Caco-2 (cell line): ENCODE measurements at regions of chr3 and their contacts with region 1.

Region 1: DNA sequence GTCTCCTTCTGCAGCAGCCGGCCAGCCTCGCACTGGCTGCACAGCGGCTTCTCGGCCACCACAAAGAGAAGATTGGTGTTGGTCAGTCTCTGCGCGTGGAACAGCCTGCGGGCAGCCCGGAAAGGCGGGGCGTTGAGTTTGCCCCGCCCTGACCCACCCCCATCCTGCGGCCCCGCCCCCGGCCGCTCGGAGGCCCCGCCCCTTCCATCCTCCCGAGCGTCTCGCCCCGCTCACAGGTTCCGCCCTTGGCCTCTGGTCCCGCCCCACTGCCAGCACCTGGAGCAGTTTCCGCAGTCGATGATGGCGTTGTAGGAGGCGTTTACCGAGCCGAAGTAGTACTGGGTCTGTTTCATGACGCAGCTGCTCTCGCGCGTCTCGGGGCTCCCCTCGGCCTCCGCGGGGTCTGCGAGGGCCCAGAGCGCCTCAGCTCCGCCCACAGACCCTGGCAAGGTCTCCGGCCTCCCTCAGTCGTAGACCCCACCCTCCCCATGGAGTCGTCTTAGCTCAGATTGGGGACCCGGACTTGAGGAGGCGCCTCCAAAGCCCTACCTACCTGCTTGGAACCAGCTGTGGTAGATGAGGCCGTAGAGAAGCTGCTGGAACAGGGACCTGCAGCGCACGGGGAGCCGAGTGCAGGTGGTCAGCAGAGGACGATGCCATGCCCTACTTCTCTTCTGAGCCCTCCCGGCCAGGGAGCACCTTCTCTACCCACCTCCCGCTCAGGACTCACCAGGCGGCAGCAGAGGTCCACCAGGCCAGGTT is 5.9 kb upstream of the TMEM115 start:
- DNase-seq: peak; percentile 89 to 93
- H3K4me3 ChIP-seq: peak overlapping the region; percentile 66
- H3K4me3 Mint-ChIP-seq: peak overlapping the region; percentile 72
- H3K27ac Mint-ChIP-seq: no peak overlapping the region
- H3K4me1 ChIP-seq: 0 out of 2 replicates have a peak, but pooled peaks cover 5% of the 10 kb centered on the region
- H3K4me1 Mint-ChIP-seq: no peaks in the 10 kb centered on the region
- H3K27me3 ChIP-seq: no peaks in the 10 kb centered on the region
- H3K27me3 Mint-ChIP-seq: peaks cover 6% of the 10 kb centered on the region
- CTCF ChIP-seq: peak in 1 of 2 experiments; percentile 17

Region 2: GRCh38 chr3:50639055-50639494 is 273.8 kb after region 1 on chr3:
- CTCF ChIA-PET with region 1: no interaction called
- POLR2A ChIA-PET with region 1: no interaction called
- intact Hi-C with region 1: no loop called
- DNase-seq: no peak
- H3K4me3 ChIP-seq: no peak overlapping the region
- H3K4me3 Mint-ChIP-seq: no peak overlapping the region
- H3K27ac Mint-ChIP-seq: no peak overlapping the region
- H3K4me1 ChIP-seq: no peaks in the 10 kb centered on the region
- H3K4me1 Mint-ChIP-seq: no peaks in the 10 kb centered on the region
- H3K27me3 ChIP-seq: no peaks in the 10 kb centered on the region
- H3K27me3 Mint-ChIP-seq: no peaks in the 10 kb centered on the region
- CTCF ChIP-seq: no peak

Region 3: DNA sequence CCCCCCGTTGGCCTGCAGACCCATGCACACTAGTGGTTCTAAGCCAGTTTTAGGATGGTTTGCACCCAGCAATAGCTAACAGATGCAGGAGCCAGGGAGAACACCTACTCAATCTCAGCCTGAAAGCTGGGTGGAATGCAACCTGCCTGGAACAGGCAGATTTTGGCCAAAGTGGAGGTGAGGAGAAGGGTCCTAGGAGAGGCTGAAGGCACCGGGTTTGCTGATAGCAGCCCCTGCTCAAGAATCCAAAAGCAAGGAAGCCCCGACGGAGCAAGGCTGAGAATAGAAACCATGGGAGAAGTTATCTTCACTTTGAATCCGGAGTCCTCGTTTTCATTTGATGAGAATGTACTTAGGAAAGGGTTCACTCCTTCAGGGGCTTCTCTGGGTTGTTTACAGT is 1566.5 kb after region 1 on chr3:
- CTCF ChIA-PET with region 1: no interaction called
- POLR2A ChIA-PET with region 1: interaction called, 17 read pairs
- intact Hi-C with region 1: no loop called
- DNase-seq: no peak
- H3K4me3 ChIP-seq: no peak overlapping the region
- H3K4me3 Mint-ChIP-seq: no peak overlapping the region
- H3K27ac Mint-ChIP-seq: no peak overlapping the region
- H3K4me1 ChIP-seq: no peaks in the 10 kb centered on the region
- H3K4me1 Mint-ChIP-seq: no peaks in the 10 kb centered on the region
- H3K27me3 ChIP-seq: no peaks in the 10 kb centered on the region
- H3K27me3 Mint-ChIP-seq: no peaks in the 10 kb centered on the region
- CTCF ChIP-seq: no peak